Natural killer cell (primary cell): ENCODE measurements at regions of chr22 and their contacts with region 1.

Region 1: GRCh38 chr22:23178512-23179254 is 1.6 kb upstream of the BCR start:
- DNase-seq: peak; percentile 69 to 85
- ATAC-seq: peak; percentile 27 to 60 (median 42)
- H3K4me3 ChIP-seq: no peak overlapping the region
- H3K4me3 Mint-ChIP-seq: peak overlapping the region; percentile 78
- H3K27ac ChIP-seq: no peak overlapping the region
- H3K27ac Mint-ChIP-seq: peak overlapping the region; percentile 86 to 87
- H3K4me1 ChIP-seq: peaks cover 75% of the 10 kb centered on the region
- H3K4me1 Mint-ChIP-seq: peaks cover 57 to 61% of the 10 kb centered on the region in 2 donors
- H3K27me3 ChIP-seq: no peaks in the 10 kb centered on the region
- H3K27me3 Mint-ChIP-seq: no peaks in the 10 kb centered on the region
- CTCF ChIP-seq: peak; percentile 96

Region 2: DNA sequence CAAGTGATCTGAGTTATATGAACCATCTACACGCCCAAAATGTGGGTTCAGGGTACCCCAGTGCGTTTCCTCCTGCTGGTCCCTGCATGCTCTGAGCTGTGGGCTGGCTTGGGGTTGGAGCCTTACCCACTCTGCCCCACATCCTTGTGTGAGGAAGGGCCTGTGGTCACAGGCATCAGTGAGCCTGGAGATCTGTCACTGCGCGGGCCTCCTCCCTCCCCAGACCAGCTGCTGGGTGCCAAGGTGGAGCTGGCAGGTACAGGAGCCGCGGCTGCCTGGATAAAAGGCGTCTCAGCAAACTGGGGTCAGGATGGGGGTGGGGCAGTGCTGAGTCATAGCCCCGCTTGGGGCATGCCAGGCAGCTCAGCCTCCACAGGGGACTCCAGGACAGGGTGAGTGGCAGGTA is 90.5 kb before region 1 on chr22:
- intact Hi-C with region 1: no loop called
- DNase-seq: peak in 1 of 2 donors; percentile 18
- ATAC-seq: peak in 2 of 3 donors; percentile 67 to 70
- H3K4me3 ChIP-seq: no peak overlapping the region
- H3K4me3 Mint-ChIP-seq: no peak overlapping the region
- H3K27ac ChIP-seq: no peak overlapping the region
- H3K27ac Mint-ChIP-seq: peak overlapping the region in 1 of 2 donors; percentile 31
- H3K4me1 ChIP-seq: peaks cover 26% of the 10 kb centered on the region
- H3K4me1 Mint-ChIP-seq: peaks cover 11 to 29% of the 10 kb centered on the region in 2 donors
- H3K27me3 ChIP-seq: no peaks in the 10 kb centered on the region
- H3K27me3 Mint-ChIP-seq: no peaks in the 10 kb centered on the region
- CTCF ChIP-seq: no peak

Region 3: DNA sequence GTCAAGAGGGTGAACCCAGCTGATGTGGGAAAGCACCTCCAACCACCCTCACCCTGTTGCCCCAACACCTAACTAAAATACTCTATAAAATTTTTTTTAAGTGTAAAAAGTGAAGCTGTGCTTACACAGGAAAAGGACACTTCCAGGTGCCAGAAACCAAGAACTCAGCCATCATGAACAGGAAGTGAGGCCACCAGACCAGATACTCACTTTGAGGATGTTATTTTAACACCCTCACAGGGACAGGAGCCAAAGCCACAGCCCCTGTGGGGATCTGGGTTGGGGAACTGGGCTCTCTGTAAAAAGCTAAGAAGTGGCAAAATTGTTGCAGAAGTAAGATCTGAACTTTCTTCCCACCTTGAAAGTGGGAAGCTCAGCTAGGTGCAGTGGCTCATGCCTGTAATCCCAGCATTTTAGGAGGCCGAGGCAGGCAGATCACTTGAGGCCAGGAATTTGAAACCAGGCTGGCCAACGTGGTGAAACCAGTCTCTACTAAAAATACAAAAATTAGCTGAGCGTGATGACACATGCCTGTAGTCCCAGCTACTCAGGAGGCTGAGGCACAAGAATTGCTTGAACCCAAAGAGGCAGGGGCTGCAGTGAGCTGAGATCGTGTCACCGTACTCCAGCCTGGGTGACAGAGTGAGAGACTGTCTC is 40.6 kb before region 1 on chr22:
- intact Hi-C with region 1: loop called (anchors 5 kb)
- DNase-seq: peak; percentile 70 to 87
- ATAC-seq: peak; percentile 62 to 85 (median 76)
- H3K4me3 ChIP-seq: no peak overlapping the region
- H3K4me3 Mint-ChIP-seq: peak overlapping the region; percentile 87
- H3K27ac ChIP-seq: peak overlapping the region; percentile 89
- H3K27ac Mint-ChIP-seq: peak overlapping the region; percentile 96 to 99
- H3K4me1 ChIP-seq: peaks cover 92% of the 10 kb centered on the region
- H3K4me1 Mint-ChIP-seq: peaks cover 37 to 72% of the 10 kb centered on the region in 2 donors
- H3K27me3 ChIP-seq: no peaks in the 10 kb centered on the region
- H3K27me3 Mint-ChIP-seq: no peaks in the 10 kb centered on the region
- CTCF ChIP-seq: no peak

Region 4: GRCh38 chr22:23163665-23164064 is 15.0 kb before region 1 on chr22:
- intact Hi-C with region 1: no loop called
- DNase-seq: no peak
- ATAC-seq: no peak
- H3K4me3 ChIP-seq: no peak overlapping the region
- H3K4me3 Mint-ChIP-seq: no peak overlapping the region
- H3K27ac ChIP-seq: no peak overlapping the region
- H3K27ac Mint-ChIP-seq: no peak overlapping the region
- H3K4me1 ChIP-seq: no peaks in the 10 kb centered on the region
- H3K4me1 Mint-ChIP-seq: no peaks in the 10 kb centered on the region
- H3K27me3 ChIP-seq: no peaks in the 10 kb centered on the region
- H3K27me3 Mint-ChIP-seq: no peaks in the 10 kb centered on the region
- CTCF ChIP-seq: no peak

Region 5: DNA sequence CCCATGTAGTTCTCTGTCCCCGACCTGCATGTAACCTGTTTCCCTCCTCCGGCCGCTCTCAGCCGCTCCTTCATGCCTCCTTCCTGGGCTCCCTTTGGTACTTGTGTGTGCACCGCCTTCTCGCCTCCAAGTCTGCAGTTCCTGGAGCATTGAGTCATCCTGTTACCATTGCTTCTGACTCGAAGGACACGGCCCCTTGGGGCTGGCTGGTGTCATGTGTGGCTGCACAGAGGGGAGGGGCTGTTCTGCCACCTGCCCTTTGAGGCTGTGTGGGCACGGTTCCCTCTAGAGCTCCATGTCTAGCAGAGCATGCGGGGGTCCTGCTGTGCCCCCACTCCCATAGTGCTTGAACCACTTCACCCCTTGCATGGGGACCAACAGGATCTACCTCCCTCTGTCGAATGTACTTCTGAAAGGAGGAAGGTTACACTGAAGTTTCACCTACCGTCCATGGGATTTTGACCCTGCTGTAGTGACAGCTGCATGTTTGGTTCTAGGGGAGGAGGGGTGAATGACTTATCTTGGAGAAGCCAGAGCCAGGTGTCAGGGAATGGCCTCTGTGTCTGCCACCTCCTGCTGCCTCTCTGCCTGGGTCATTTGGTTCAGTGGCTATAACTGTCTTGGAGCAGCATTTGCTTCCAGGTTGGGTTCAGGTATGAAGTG is 41.3 kb after region 1 on chr22:
- intact Hi-C with region 1: loop called (anchors 2 kb)
- DNase-seq: peak; percentile 54 to 55
- ATAC-seq: peak; percentile 58 to 80 (median 63)
- H3K4me3 ChIP-seq: no peak overlapping the region
- H3K4me3 Mint-ChIP-seq: peak overlapping the region; percentile 88
- H3K27ac ChIP-seq: peak overlapping the region; percentile 32
- H3K27ac Mint-ChIP-seq: peak overlapping the region; percentile 92 to 96
- H3K4me1 ChIP-seq: peaks cover 93% of the 10 kb centered on the region
- H3K4me1 Mint-ChIP-seq: peaks cover 97 to 99% of the 10 kb centered on the region in 2 donors
- H3K27me3 ChIP-seq: no peaks in the 10 kb centered on the region
- H3K27me3 Mint-ChIP-seq: no peaks in the 10 kb centered on the region
- CTCF ChIP-seq: no peak

Region 6: DNA sequence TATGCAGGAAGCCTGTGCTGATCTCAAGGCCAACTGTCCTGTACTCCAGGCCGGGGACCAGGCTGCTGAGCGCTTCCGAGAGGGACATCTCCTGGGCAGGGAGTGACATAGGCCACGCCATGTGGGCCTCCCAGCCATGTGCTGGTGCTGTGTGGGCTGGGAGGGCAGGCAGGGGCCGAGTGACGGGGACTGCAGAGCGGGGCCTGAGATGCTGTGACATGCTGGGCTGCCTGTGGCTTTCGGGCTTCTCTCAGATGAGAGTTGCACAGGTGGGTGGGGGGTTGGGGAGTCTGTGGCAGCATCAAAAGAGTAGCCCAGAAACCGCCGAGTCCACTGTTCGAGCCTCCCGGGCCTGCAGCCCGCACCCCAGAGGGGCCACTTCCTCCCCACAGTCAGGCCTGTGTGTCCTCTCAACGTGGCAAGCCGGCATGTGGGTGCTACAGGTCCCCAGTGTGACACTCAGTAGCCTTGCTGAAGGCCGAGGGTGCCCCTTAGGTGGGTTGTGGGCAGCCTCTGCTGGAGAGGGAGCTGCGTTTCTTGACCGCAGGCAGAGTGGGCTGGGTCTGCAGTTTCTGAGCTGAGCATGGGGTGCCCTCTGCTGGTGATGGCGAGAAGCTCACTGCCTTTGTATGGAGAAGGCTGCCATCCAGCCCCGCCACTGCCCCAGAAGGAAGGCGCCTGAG is 102.9 kb after region 1 on chr22:
- intact Hi-C with region 1: loop called (anchors 1 kb)
- DNase-seq: peak; percentile 86 to 90
- ATAC-seq: peak; percentile 69 to 82 (median 72)
- H3K4me3 ChIP-seq: no peak overlapping the region
- H3K4me3 Mint-ChIP-seq: peak overlapping the region; percentile 4
- H3K27ac ChIP-seq: peak overlapping the region; percentile 38
- H3K27ac Mint-ChIP-seq: peak overlapping the region; percentile 82 to 87
- H3K4me1 ChIP-seq: peaks cover 60% of the 10 kb centered on the region
- H3K4me1 Mint-ChIP-seq: peaks cover 32 to 52% of the 10 kb centered on the region in 2 donors
- H3K27me3 ChIP-seq: no peaks in the 10 kb centered on the region
- H3K27me3 Mint-ChIP-seq: no peaks in the 10 kb centered on the region
- CTCF ChIP-seq: peak; percentile 98

Region 7: DNA sequence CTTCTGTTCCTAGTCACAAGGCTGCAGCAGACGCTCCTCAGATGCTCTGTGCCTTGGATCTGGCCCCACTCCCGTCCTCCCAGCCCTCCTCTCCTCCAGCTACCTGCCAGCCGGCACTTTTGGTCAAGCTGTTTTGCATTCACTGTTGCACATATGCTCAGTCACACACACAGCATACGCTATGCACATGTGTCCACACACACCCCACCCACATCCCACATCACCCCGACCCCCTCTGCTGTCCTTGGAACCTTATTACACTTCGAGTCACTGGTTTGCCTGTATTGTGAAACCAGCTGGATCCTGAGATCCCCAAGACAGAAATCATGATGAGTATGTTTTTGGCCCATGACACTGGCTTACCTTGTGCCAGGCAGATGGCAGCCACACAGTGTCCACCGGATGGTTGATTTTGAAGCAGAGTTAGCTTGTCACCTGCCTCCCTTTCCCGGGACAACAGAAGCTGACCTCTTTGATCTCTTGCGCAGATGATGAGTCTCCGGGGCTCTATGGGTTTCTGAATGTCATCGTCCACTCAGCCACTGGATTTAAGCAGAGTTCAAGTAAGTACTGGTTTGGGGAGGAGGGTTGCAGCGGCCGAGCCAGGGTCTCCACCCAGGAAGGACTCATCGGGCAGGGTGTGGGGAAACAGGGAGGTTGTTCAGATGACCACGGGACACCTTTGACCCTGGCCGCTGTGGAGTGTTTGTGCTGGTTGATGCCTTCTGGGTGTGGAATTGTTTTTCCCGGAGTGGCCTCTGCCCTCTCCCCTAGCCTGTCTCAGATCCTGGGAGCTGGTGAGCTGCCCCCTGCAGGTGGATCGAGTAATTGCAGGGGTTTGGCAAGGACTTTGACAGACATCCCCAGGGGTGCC is 111.4 kb after region 1 on chr22:
- intact Hi-C with region 1: loop called (anchors 1 kb)
- DNase-seq: peak; percentile 59 to 76
- ATAC-seq: peak; percentile 48 to 77 (median 67)
- H3K4me3 ChIP-seq: no peak overlapping the region
- H3K4me3 Mint-ChIP-seq: no peak overlapping the region
- H3K27ac ChIP-seq: no peak overlapping the region
- H3K27ac Mint-ChIP-seq: peak overlapping the region in 1 of 2 donors; percentile 27
- H3K4me1 ChIP-seq: no peaks in the 10 kb centered on the region
- H3K4me1 Mint-ChIP-seq: peaks cover 6 to 11% of the 10 kb centered on the region in 2 donors
- H3K27me3 ChIP-seq: no peaks in the 10 kb centered on the region
- H3K27me3 Mint-ChIP-seq: no peaks in the 10 kb centered on the region
- CTCF ChIP-seq: peak; percentile 83

Region 8: GRCh38 chr22:23385291-23386244 is 206.9 kb after region 1 on chr22:
- intact Hi-C with region 1: loop called (anchors 5 kb)
- DNase-seq: peak; percentile 80 to 89
- ATAC-seq: peak; percentile 74 to 97 (median 92)
- H3K4me3 ChIP-seq: no peak overlapping the region
- H3K4me3 Mint-ChIP-seq: no peak overlapping the region
- H3K27ac ChIP-seq: no peak overlapping the region
- H3K27ac Mint-ChIP-seq: no peak overlapping the region
- H3K4me1 ChIP-seq: peaks cover 3% of the 10 kb centered on the region
- H3K4me1 Mint-ChIP-seq: peaks cover 6 to 8% of the 10 kb centered on the region in 2 donors
- H3K27me3 ChIP-seq: no peaks in the 10 kb centered on the region
- H3K27me3 Mint-ChIP-seq: peaks cover 0 to 6% of the 10 kb centered on the region in 2 donors
- CTCF ChIP-seq: peak; percentile 96

Region 9: GRCh38 chr22:23414727-23415431 is 236.2 kb after region 1 on chr22:
- intact Hi-C with region 1: no loop called
- DNase-seq: no peak
- ATAC-seq: no peak
- H3K4me3 ChIP-seq: no peak overlapping the region
- H3K4me3 Mint-ChIP-seq: no peak overlapping the region
- H3K27ac ChIP-seq: no peak overlapping the region
- H3K27ac Mint-ChIP-seq: no peak overlapping the region
- H3K4me1 ChIP-seq: no peaks in the 10 kb centered on the region
- H3K4me1 Mint-ChIP-seq: peaks cover 0 to 6% of the 10 kb centered on the region in 2 donors
- H3K27me3 ChIP-seq: no peaks in the 10 kb centered on the region
- H3K27me3 Mint-ChIP-seq: peaks cover 0 to 7% of the 10 kb centered on the region in 2 donors
- CTCF ChIP-seq: no peak